ENCODE measurements at regions of chr4 and their contacts with region 1.

Region 1: DNA sequence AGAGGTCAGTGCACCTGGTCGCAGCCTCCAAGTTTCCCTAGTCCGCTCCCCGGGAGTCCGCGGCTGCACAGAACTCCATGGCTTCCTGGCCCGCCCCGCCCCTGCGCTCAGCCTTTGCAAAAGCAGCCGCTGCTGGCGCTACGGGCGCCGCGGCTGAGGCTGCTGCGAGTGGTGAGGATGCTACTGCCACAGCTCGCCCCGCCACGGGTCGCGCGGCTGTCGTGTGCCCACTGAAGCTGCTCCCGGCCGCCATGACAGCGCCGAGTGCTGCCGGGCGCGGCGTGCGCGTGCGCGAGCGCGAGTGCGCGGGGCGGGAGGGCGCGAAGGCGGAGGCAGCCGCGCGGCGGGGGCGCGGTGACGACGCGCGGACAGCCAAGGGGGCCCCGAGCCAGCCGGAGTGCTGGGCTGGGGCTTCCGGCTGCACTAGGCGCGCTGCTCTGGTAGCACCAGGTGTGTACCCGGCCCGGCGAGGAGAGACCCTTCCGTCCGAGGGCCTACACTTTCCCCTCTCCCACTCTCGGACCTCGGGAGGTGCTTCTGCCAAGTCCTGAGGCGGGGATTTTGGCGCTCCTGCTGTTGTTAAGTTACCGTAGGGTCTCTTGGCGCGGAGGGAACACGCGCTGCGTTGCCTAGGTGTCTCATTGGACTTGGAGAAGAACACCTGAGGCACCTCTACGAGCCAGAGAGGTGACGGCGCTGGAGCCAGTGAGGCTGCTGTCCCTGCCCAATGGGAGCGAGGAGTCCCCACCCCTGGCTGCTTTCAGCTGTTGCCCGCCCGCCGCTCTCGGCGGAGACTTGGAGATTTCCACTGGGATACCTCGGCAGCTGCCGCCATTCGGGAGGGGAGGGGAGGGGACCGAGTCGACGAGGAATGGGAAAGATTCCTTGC is 619 bp upstream of the LRBA start:
- DNase-seq: peak; percentile 82
- H3K4me3 Mint-ChIP-seq: peak overlapping the region; percentile 100
- H3K27ac Mint-ChIP-seq: peak overlapping the region; percentile 98
- H3K4me1 Mint-ChIP-seq: peaks cover 24% of the 10 kb centered on the region
- H3K27me3 Mint-ChIP-seq: no peaks in the 10 kb centered on the region

Region 2: GRCh38 chr4:151029537-151029936 is 13.8 kb after region 1 on chr4:
- CTCF ChIA-PET with region 1: interaction called, 3 read pairs
- POLR2A ChIA-PET with region 1: interaction called, 17 read pairs
- DNase-seq: no peak
- H3K4me3 Mint-ChIP-seq: no peak overlapping the region
- H3K27ac Mint-ChIP-seq: no peak overlapping the region
- H3K4me1 Mint-ChIP-seq: peaks cover 24% of the 10 kb centered on the region
- H3K27me3 Mint-ChIP-seq: no peaks in the 10 kb centered on the region

Region 3: GRCh38 chr4:151099229-151099975 is 83.7 kb after region 1 on chr4 and contains the start of gene RPS3A:
- CTCF ChIA-PET with region 1: interaction called, 4 read pairs
- POLR2A ChIA-PET with region 1: interaction called, 57 read pairs
- DNase-seq: peak; percentile 99
- H3K4me3 Mint-ChIP-seq: peak within 1 kb of the TSS; percentile 85
- H3K27ac Mint-ChIP-seq: peak within 1 kb of the TSS; percentile 87
- H3K4me1 Mint-ChIP-seq: peaks cover 57% of the 10 kb centered on the region
- H3K27me3 Mint-ChIP-seq: no peaks in the 10 kb centered on the region
- total RNA-seq, gene RPS3A: 1,515 to 1,526 TPM

Region 4: DNA sequence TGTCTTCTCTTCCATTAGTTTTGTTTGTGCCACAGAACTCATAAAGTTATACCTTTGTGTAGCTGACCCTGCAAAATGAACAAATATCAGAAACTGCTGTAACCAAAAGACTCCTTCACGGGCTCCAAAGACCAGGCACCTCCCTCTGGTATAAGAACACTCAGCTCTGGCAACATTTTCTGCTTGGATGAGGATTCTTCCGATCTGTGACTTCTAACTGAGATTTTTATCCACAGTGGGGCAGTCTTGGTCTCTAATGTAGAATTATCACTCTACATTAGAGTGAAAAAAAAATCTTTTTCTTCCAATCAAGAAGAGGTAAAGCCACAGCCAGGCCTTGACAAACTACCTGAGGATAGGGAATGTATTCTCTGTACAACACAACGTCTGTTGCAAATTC is 222.8 kb after region 1 on chr4:
- CTCF ChIA-PET with region 1: no interaction called
- POLR2A ChIA-PET with region 1: no interaction called
- DNase-seq: no peak
- H3K4me3 Mint-ChIP-seq: no peak overlapping the region
- H3K27ac Mint-ChIP-seq: no peak overlapping the region
- H3K4me1 Mint-ChIP-seq: no peaks in the 10 kb centered on the region
- H3K27me3 Mint-ChIP-seq: peaks cover 11% of the 10 kb centered on the region